ENCODE measurements at regions of chr18 and their contacts with region 1.

Region 1: DNA sequence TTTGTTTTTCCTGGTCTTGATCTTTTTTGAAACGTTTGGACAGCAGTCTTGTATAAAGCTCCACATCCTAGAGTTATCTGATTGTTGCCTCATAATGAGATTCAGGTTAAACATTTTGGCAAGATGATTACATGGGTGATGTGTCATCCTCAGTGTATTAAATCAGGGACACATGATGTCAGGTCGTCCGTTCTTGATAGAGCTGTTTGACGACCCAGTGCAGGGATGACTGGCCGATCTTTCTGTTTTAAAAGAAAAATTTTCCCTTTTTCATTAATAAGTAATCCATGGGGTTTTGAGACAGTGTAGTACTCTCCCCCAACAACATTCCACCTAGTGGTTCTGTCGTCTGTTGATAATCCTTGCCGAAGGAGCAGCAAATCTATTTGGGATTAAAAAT is 44.5 kb upstream of the SERPINB2 start:
- DNase-seq: no peak
- H3K4me3 ChIP-seq: no peak overlapping the region
- H3K27ac ChIP-seq: no peak overlapping the region
- H3K4me1 ChIP-seq: no peaks in the 10 kb centered on the region
- H3K27me3 ChIP-seq: peaks cover 4 to 5% of the 10 kb centered on the region in 2 experiments
- CTCF ChIP-seq: no peak
- POLR2A ChIP-seq: no peak

Region 2: GRCh38 chr18:63823518-63824219 is 19.3 kb before region 1 on chr18:
- CTCF ChIA-PET with region 1: interaction called, 16 read pairs
- POLR2A ChIA-PET with region 1: no interaction called
- dilution Hi-C with region 1: no loop called
- intact Hi-C with region 1: no loop called
- DNase-seq: peak; percentile 12
- H3K4me3 ChIP-seq: no peak overlapping the region
- H3K27ac ChIP-seq: no peak overlapping the region
- H3K4me1 ChIP-seq: no peaks in the 10 kb centered on the region
- H3K27me3 ChIP-seq: peaks cover 2 to 10% of the 10 kb centered on the region in 2 experiments
- CTCF ChIP-seq: peak; percentile 29 to 34
- POLR2A ChIP-seq: no peak